GM12878 (cell line): ENCODE measurements at regions of chr5 and their contacts with region 1.

Region 1: DNA sequence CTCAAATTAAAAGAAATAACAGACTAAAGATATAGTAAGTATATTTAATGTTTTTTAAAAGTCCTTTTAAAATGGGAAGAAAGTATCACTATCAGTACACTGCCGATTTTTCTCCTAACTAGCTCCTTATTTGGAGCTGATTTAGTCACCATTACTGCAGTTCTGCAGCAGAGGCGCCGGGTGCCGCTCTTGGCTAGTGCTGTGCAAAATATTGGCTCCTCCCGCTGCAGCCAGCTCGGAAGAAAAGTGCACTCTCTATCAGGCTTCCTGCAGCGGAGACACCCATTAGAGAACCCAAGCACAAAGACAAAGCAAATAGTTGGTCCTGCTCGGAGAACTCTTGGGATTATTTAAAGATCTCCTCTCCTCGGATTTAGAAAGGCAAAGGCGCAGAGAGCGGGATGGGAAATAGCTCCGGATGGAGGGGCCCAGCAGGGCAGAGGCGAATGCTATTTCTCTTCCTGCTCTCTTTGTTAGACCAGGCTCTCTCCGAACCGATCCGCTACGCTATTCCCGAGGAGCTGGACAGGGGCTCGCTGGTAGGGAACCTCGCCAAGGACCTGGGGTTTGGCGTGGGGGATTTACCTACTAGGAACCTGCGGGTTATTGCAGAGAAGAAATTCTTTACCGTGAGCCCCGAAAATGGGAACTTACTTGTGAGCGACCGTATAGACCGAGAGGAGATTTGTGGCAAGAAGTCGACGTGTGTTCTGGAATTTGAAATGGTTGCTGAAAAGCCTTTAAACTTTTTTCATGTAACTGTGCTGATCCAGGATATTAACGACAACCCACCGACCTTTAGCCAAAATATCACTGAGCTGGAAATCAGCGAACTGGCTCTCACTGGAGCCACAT is at the start of gene PCDHGB3:
- DNase-seq: no peak
- ATAC-seq: peak; percentile 96
- H3K4me3 ChIP-seq: 0 out of 2 replicates have a peak within 1 kb of the TSS, but pooled peaks have one; percentile 18
- H3K27ac ChIP-seq: no peak within 1 kb of the TSS
- H3K4me1 ChIP-seq: no peaks in the 10 kb centered on the region
- H3K27me3 ChIP-seq: no peaks in the 10 kb centered on the region; a peak in 1 of 4 replicates
- CTCF ChIP-seq: peak; percentile 38 to 72 (median 43)
- EP300 ChIP-seq: no peak
- POLR2A ChIP-seq: no peak
- RAD21 ChIP-seq: 0 out of 2 replicates have a peak, but pooled peaks have one; percentile 1
- polyA plus RNA-seq, gene PCDHGB3: not detected

Region 2: GRCh38 chr5:141320225-141321169 is 49.7 kb before region 1 on chr5 and contains the start of gene TAF7:
- CTCF ChIA-PET with region 1: interaction called, 18 read pairs
- POLR2A ChIA-PET with region 1: interaction called, 7 read pairs
- RAD21 ChIA-PET with region 1: interaction called, 14 read pairs
- SMC1A ChIA-PET with region 1: interaction called, 5 read pairs
- in situ Hi-C with region 1: no loop called
- intact Hi-C with region 1: no loop called
- DNase-seq: peak; percentile 72
- ATAC-seq: peak; percentile 96
- H3K4me3 ChIP-seq: peak within 1 kb of the TSS; percentile 81
- H3K27ac ChIP-seq: peak within 1 kb of the TSS; percentile 96
- H3K4me1 ChIP-seq: no peaks in the 10 kb centered on the region
- H3K27me3 ChIP-seq: no peaks in the 10 kb centered on the region
- CTCF ChIP-seq: peak; percentile 81 to 93 (median 90)
- EP300 ChIP-seq: no peak
- POLR2A ChIP-seq: peak; percentile 99
- RAD21 ChIP-seq: peak; percentile 70
- polyA plus RNA-seq, gene TAF7: 43.2 to 69.1 TPM

Region 3: GRCh38 chr5:141402553-141403260 is 32.5 kb after region 1 on chr5 and contains the start of gene PCDHGA9:
- CTCF ChIA-PET with region 1: interaction called, 10 read pairs
- POLR2A ChIA-PET with region 1: no interaction called
- RAD21 ChIA-PET with region 1: no interaction called
- SMC1A ChIA-PET with region 1: interaction called, 3 read pairs
- in situ Hi-C with region 1: no loop called
- intact Hi-C with region 1: no loop called
- DNase-seq: no peak
- ATAC-seq: peak; percentile 45; the same call in 2 of the 3 replicates
- H3K4me3 ChIP-seq: no peak within 1 kb of the TSS
- H3K27ac ChIP-seq: no peak within 1 kb of the TSS
- H3K4me1 ChIP-seq: no peaks in the 10 kb centered on the region
- H3K27me3 ChIP-seq: no peaks in the 10 kb centered on the region
- CTCF ChIP-seq: peak in 2 of 3 experiments; percentile 28 to 35; a peak in 2 of 6 replicates
- EP300 ChIP-seq: no peak
- POLR2A ChIP-seq: no peak
- RAD21 ChIP-seq: 0 out of 2 replicates have a peak, but pooled peaks have one; percentile 13
- polyA plus RNA-seq, gene PCDHGA9: not detected

Region 4: GRCh38 chr5:141430332-141431113 is 60.3 kb after region 1 on chr5 and contains the start of gene PCDHGA12:
- CTCF ChIA-PET with region 1: interaction called, 11 read pairs
- POLR2A ChIA-PET with region 1: no interaction called
- RAD21 ChIA-PET with region 1: interaction called, 9 read pairs
- SMC1A ChIA-PET with region 1: interaction called, 5 read pairs
- in situ Hi-C with region 1: no loop called
- intact Hi-C with region 1: no loop called
- DNase-seq: peak; percentile 37
- ATAC-seq: peak; percentile 96
- H3K4me3 ChIP-seq: peak within 1 kb of the TSS; percentile 22; the same call in 1 of the 2 replicates
- H3K27ac ChIP-seq: no peak within 1 kb of the TSS
- H3K4me1 ChIP-seq: no peaks in the 10 kb centered on the region; the same call in 1 of the 2 replicates
- H3K27me3 ChIP-seq: no peaks in the 10 kb centered on the region
- CTCF ChIP-seq: peak; percentile 62 to 82 (median 68)
- EP300 ChIP-seq: no peak
- POLR2A ChIP-seq: no peak
- RAD21 ChIP-seq: peak; percentile 56
- polyA plus RNA-seq, gene PCDHGA12: not detected

Region 5: DNA sequence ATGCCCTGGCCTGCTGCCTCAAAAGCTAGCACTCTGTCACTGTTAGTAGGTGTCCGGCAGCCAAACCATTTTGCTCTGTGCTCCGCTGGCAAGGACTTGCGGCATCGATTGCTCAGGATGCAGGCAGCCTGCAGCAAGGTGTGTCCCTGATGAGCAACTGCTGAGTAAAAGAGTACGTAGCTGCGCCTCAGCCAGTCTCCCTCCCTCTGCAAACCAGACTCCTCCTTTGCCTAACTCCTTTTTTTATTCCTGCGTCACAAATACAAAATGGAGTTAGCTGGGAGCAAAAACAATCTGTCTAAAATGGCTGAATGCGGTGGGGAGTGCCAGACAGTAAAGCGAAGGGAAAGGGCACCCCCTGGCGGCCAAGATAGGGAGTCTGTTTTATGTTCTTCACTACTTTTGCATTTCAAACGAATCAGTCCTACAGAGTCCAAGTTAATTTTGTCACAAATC is 187.5 kb after region 1 on chr5:
- CTCF ChIA-PET with region 1: interaction called, 14 read pairs
- POLR2A ChIA-PET with region 1: no interaction called
- RAD21 ChIA-PET with region 1: interaction called, 9 read pairs
- SMC1A ChIA-PET with region 1: interaction called, 16 read pairs
- in situ Hi-C with region 1: no loop called
- intact Hi-C with region 1: no loop called
- DNase-seq: peak; percentile 43
- ATAC-seq: peak; percentile 96
- H3K4me3 ChIP-seq: no peak overlapping the region
- H3K27ac ChIP-seq: peak overlapping the region; percentile 22; the same call in 1 of the 2 replicates
- H3K4me1 ChIP-seq: no peaks in the 10 kb centered on the region
- H3K27me3 ChIP-seq: no peaks in the 10 kb centered on the region
- CTCF ChIP-seq: peak; percentile 72 to 82 (median 78)
- EP300 ChIP-seq: no peak
- POLR2A ChIP-seq: 0 out of 2 replicates have a peak, but pooled peaks have one; percentile 32
- RAD21 ChIP-seq: peak; percentile 96